Activated CD8-positive, alpha-beta T cell treated with anti-CD3 and anti-CD28 coated beads, Interleukin-2, amount 10 ng/mL, durations not matched to agents 7 days and 5 days (primary cell): ENCODE measurements at regions of chr14 and their contacts with region 1.

Region 1: GRCh38 chr14:68911594-68912227 is 67.4 kb downstream of the ACTN1 start:
- DNase-seq: peak; percentile 88
- ATAC-seq: peak; percentile 95
- H3K4me3 Mint-ChIP-seq: no peak overlapping the region
- H3K27ac Mint-ChIP-seq: no peak overlapping the region
- H3K4me1 Mint-ChIP-seq: peaks cover 21% of the 10 kb centered on the region
- H3K27me3 Mint-ChIP-seq: no peaks in the 10 kb centered on the region

Region 2: DNA sequence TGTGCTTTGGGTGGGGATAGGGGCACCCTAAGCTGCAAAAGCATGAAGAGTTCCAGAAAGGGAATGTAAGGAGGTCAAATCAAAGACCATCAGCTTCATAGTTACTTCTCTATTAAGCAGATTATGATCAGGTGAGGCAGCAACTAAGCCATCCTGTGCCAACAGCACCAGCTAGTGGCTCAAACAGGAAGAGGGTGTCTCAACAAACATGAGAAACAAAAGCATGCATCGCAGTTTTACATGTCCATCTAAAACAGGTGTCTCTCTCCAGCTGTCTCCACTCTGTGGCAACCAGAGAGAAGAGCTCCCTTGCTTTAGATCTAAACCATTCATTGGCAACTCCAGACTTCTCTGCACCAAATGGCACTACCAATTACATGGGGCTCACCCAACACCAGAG is 14.5 kb after region 1 on chr14:
- CTCF ChIA-PET with region 1: interaction called, 81 read pairs
- POLR2A ChIA-PET with region 1: interaction called, 3 read pairs
- DNase-seq: peak; percentile 36
- ATAC-seq: no peak
- H3K4me3 Mint-ChIP-seq: no peak overlapping the region
- H3K27ac Mint-ChIP-seq: peak overlapping the region; percentile 54
- H3K4me1 Mint-ChIP-seq: peaks cover 68% of the 10 kb centered on the region
- H3K27me3 Mint-ChIP-seq: no peaks in the 10 kb centered on the region

Region 3: GRCh38 chr14:68958553-68958952 is 46.8 kb after region 1 on chr14:
- CTCF ChIA-PET with region 1: interaction called, 19 read pairs
- POLR2A ChIA-PET with region 1: no interaction called
- DNase-seq: no peak
- ATAC-seq: no peak
- H3K4me3 Mint-ChIP-seq: no peak overlapping the region
- H3K27ac Mint-ChIP-seq: no peak overlapping the region
- H3K4me1 Mint-ChIP-seq: peaks cover 80% of the 10 kb centered on the region
- H3K27me3 Mint-ChIP-seq: no peaks in the 10 kb centered on the region

Region 4: GRCh38 chr14:68994056-68994455 is 82.3 kb after region 1 on chr14:
- CTCF ChIA-PET with region 1: interaction called, 52 read pairs
- POLR2A ChIA-PET with region 1: no interaction called
- DNase-seq: no peak
- ATAC-seq: no peak
- H3K4me3 Mint-ChIP-seq: no peak overlapping the region
- H3K27ac Mint-ChIP-seq: peak overlapping the region; percentile 60
- H3K4me1 Mint-ChIP-seq: peaks cover 35% of the 10 kb centered on the region
- H3K27me3 Mint-ChIP-seq: peaks cover 3% of the 10 kb centered on the region

Region 5: DNA sequence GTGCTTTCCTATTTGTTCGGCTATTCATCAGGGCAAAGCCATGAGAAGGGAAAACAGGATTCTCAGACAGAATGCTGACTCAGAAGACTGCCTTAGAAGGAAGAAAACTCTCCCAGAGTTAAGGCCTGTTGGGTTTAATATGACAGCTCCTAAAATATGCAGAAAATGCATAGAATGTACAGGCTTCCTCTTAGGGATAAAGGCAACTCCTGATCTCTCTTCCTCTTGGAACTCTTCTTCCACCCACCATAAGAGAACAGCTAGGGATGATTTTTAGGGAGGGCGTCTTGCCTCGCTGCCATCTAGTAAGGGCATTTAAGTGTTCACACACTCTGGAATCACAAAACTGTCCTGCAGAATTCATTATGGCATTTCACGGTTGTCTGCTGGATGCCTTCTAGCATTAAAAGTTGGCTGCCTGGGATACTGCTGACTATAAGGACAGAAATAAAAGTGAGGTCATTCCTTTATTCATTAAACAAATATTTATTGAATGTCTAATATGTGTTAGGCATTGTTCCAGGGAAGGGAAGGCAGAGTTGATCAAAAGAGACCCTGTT is 167.6 kb after region 1 on chr14:
- CTCF ChIA-PET with region 1: interaction called, 10 read pairs
- POLR2A ChIA-PET with region 1: no interaction called
- DNase-seq: no peak
- ATAC-seq: no peak
- H3K4me3 Mint-ChIP-seq: no peak overlapping the region
- H3K27ac Mint-ChIP-seq: no peak overlapping the region
- H3K4me1 Mint-ChIP-seq: no peaks in the 10 kb centered on the region
- H3K27me3 Mint-ChIP-seq: no peaks in the 10 kb centered on the region

Region 6: GRCh38 chr14:69107407-69108003 is 195.8 kb after region 1 on chr14:
- CTCF ChIA-PET with region 1: interaction called, 78 read pairs
- POLR2A ChIA-PET with region 1: interaction called, 3 read pairs
- DNase-seq: peak; percentile 58
- ATAC-seq: peak; percentile 68
- H3K4me3 Mint-ChIP-seq: no peak overlapping the region
- H3K27ac Mint-ChIP-seq: no peak overlapping the region
- H3K4me1 Mint-ChIP-seq: peaks cover 4% of the 10 kb centered on the region
- H3K27me3 Mint-ChIP-seq: no peaks in the 10 kb centered on the region